Prostate gland (tissue), 2 donors: ENCODE measurements at regions of chr1 and their contacts with region 1.

Region 1: GRCh38 chr1:8560611-8561544 is 243.0 kb downstream of the SLC45A1 start:
- DNase-seq: peak; percentile 24
- H3K4me3 ChIP-seq: no peak overlapping the region
- H3K27ac ChIP-seq: peak overlapping the region in 1 of 2 donors; percentile 28
- H3K4me1 ChIP-seq: no peaks in the 10 kb centered on the region
- H3K27me3 ChIP-seq: no peaks in the 10 kb centered on the region
- CTCF ChIP-seq: peak; percentile 76 to 97 (median 89)
- POLR2A ChIP-seq: no peak

Region 2: GRCh38 chr1:8423650-8424538 is 137.0 kb before region 1 on chr1:
- intact Hi-C with region 1: no loop called
- DNase-seq: no peak
- H3K4me3 ChIP-seq: peak overlapping the region; percentile 79 to 84
- H3K27ac ChIP-seq: peak overlapping the region; percentile 93 to 98
- H3K4me1 ChIP-seq: peaks cover 22% of the 10 kb centered on the region
- H3K27me3 ChIP-seq: no peaks in the 10 kb centered on the region
- CTCF ChIP-seq: peak in 2 of 4 experiments; percentile 27
- POLR2A ChIP-seq: peak; percentile 11

Region 3: GRCh38 chr1:8463144-8463927 is 97.5 kb before region 1 on chr1:
- intact Hi-C with region 1: loop called (anchors 10 kb)
- DNase-seq: peak; percentile 44
- H3K4me3 ChIP-seq: no peak overlapping the region
- H3K27ac ChIP-seq: peak overlapping the region; percentile 69 to 72
- H3K4me1 ChIP-seq: peaks cover 43% of the 10 kb centered on the region
- H3K27me3 ChIP-seq: no peaks in the 10 kb centered on the region
- CTCF ChIP-seq: no peak
- POLR2A ChIP-seq: no peak

Region 4: DNA sequence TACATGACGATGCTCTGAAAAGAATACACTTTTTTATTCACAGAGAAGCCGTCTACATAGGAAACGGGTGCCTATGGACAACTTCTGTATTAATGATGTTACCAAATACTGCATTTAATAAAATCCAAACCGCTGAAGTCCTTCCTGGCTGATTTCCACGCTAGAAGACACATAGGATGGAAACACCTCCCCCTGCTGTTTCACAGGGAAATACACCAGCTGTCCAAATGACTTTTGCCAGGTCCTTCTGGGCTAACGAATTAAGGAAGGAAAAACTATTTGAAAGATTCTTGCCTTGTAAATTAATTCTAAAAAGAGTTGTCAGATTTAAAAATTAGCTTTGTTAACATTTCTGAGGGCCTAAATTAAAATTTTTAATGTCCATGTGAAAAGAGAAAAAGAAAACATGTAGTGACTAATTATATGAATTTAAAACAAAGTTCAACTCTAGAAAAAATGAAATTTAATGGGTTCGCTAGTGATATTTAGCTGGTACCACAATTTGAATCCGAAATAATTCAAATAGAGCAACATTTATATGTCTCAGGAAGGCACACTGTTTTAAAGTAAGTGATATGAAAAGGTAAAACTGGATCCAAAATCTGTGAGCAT is 110.5 kb after region 1 on chr1:
- intact Hi-C with region 1: loop called (anchors 2 kb)
- DNase-seq: peak; percentile 37
- H3K4me3 ChIP-seq: no peak overlapping the region
- H3K27ac ChIP-seq: no peak overlapping the region
- H3K4me1 ChIP-seq: peaks cover 10% of the 10 kb centered on the region
- H3K27me3 ChIP-seq: no peaks in the 10 kb centered on the region
- CTCF ChIP-seq: peak in 3 of 4 experiments; percentile 58 to 78 (median 75)
- POLR2A ChIP-seq: no peak

Region 5: GRCh38 chr1:8727809-8728213 is 166.9 kb after region 1 on chr1:
- intact Hi-C with region 1: loop called (anchors 5 kb)
- DNase-seq: no peak
- H3K4me3 ChIP-seq: no peak overlapping the region
- H3K27ac ChIP-seq: no peak overlapping the region
- H3K4me1 ChIP-seq: peaks cover 4% of the 10 kb centered on the region
- H3K27me3 ChIP-seq: no peaks in the 10 kb centered on the region
- CTCF ChIP-seq: no peak
- POLR2A ChIP-seq: no peak

Region 6: DNA sequence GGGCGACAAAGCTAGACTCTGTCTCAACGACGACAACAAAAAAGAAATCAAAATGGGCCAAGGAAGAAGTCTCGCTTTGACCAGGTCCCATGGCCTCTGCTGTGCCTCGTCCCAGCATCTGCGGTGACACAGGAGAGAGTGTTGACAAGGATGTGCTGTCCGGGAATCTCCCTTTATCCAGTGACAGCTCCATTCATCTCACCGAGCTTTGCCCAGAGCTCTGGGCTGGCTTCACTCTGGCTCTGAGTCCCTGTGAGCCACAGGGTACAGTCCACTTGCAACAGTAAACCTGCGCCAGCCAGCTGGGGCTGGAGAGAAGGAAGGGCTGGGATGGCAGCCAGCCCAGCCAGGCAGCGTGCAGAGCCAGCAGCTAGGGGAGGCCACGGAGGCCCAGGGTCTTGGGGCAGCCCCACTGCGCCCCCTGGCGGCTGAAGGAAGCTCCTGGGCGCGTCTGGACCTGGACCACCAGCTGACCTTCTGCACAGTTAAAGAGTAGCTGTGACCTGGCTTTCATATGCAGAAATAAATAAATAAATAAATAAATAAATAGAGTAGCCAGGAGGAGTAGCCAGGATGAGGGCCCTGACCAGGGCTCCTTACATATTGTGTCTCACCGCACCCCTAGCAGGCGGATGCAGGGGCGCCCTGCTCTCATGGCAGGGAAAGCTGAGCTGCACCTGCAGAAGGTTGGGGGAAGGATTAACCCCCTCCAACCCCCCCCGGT is 287.9 kb after region 1 on chr1:
- intact Hi-C with region 1: loop called (anchors 5 kb)
- DNase-seq: peak; percentile 94
- H3K4me3 ChIP-seq: no peak overlapping the region
- H3K27ac ChIP-seq: peak overlapping the region; percentile 5 to 67
- H3K4me1 ChIP-seq: peaks cover 9% of the 10 kb centered on the region
- H3K27me3 ChIP-seq: no peaks in the 10 kb centered on the region
- CTCF ChIP-seq: peak; percentile 88 to 97 (median 96)
- POLR2A ChIP-seq: peak; percentile 19